ENCODE measurements at regions of chr7 and their contacts with region 1.

Region 1: GRCh38 chr7:73557108-73557396 is 438 bp downstream of the BCL7B start:
- DNase-seq: peak; percentile 89 to 92
- ATAC-seq: peak; percentile 76 to 80
- H3K4me3 ChIP-seq: peak overlapping the region; percentile 70 to 93 (median 75)
- H3K27ac ChIP-seq: peak overlapping the region; percentile 92 to 99 (median 98)
- H3K4me1 ChIP-seq: peaks cover 25 to 33% of the 10 kb centered on the region in 2 donors
- H3K27me3 ChIP-seq: no peaks in the 10 kb centered on the region
- CTCF ChIP-seq: no peak
- POLR2A ChIP-seq: no peak

Region 2: GRCh38 chr7:72087926-72088325 is 1469.1 kb before region 1 on chr7:
- in situ Hi-C with region 1: no loop called
- intact Hi-C with region 1: no loop called
- DNase-seq: no peak
- ATAC-seq: no peak
- H3K4me3 ChIP-seq: no peak overlapping the region
- H3K27ac ChIP-seq: no peak overlapping the region
- H3K4me1 ChIP-seq: no peaks in the 10 kb centered on the region
- H3K27me3 ChIP-seq: no peaks in the 10 kb centered on the region
- CTCF ChIP-seq: no peak
- POLR2A ChIP-seq: no peak

Region 3: DNA sequence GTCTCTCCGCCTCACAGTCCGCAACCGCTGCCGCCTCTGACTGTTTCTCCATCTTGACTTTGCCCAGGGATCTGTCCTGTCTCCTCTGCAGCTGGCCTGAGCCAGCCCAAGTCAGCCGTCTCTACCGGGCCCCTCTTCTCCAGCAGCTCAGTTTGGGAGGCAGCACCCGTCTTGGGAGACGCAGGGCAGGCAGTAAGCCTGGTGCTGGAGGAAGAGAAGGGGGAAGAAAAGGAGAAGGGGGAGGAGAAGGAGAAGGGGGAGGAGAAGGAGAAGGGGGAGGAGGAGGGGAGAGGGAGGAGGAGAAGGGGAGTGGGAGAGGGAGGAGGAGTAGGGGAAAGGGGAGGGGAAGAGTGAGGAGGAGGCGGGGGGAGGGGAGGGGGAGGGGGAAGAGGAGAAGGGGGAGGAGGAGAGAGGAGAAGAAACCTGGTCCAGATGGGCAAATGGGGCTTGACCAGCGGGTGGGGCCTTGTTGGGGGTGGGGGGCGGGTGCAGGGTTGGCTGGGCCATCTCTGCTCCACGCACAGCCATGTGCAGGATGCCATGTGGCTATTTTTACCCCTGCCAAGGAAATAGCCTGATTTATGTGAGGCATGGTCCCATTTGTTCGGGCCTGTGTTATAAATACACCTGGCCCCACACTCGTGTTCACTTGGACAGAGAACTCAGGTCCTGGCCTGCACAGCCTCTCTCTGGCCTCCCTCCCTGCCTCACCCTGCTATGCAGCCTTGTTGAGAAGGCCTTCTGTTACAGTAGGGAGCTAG is 159.4 kb before region 1 on chr7:
- in situ Hi-C with region 1: no loop called
- intact Hi-C with region 1: loop called (anchors 5 kb)
- DNase-seq: peak; percentile 90 to 91
- ATAC-seq: peak; percentile 89 to 91
- H3K4me3 ChIP-seq: peak overlapping the region; percentile 28 to 58 (median 50)
- H3K27ac ChIP-seq: peak overlapping the region; percentile 83 to 97 (median 90)
- H3K4me1 ChIP-seq: peaks cover 20 to 24% of the 10 kb centered on the region in 2 donors
- H3K27me3 ChIP-seq: no peaks in the 10 kb centered on the region
- CTCF ChIP-seq: no peak
- POLR2A ChIP-seq: peak; percentile 35 to 39

Region 4: DNA sequence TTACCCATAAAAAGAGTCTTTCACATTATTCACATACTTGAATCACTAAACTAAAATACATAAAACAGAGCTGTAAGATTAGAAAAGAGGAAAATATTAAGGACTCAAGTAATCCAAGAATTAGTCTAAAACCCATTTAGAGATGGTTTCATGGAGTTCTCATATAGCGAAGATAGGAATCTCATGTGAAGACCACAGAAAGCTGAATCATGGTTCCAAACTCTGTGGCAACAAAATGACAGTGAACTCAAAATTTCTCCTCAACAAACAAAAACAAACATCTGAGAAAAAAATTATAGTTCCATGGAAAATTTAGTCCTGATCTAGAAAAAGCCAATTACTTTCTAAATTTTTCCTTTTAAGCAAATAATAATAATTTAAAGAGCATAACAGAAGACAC is 69.6 kb before region 1 on chr7:
- in situ Hi-C with region 1: no loop called
- intact Hi-C with region 1: no loop called
- DNase-seq: no peak
- ATAC-seq: no peak
- H3K4me3 ChIP-seq: no peak overlapping the region
- H3K27ac ChIP-seq: peak overlapping the region in 1 of 4 donors; percentile 44
- H3K4me1 ChIP-seq: peaks cover 7 to 8% of the 10 kb centered on the region in 2 donors
- H3K27me3 ChIP-seq: no peaks in the 10 kb centered on the region
- CTCF ChIP-seq: no peak
- POLR2A ChIP-seq: no peak

Region 5: DNA sequence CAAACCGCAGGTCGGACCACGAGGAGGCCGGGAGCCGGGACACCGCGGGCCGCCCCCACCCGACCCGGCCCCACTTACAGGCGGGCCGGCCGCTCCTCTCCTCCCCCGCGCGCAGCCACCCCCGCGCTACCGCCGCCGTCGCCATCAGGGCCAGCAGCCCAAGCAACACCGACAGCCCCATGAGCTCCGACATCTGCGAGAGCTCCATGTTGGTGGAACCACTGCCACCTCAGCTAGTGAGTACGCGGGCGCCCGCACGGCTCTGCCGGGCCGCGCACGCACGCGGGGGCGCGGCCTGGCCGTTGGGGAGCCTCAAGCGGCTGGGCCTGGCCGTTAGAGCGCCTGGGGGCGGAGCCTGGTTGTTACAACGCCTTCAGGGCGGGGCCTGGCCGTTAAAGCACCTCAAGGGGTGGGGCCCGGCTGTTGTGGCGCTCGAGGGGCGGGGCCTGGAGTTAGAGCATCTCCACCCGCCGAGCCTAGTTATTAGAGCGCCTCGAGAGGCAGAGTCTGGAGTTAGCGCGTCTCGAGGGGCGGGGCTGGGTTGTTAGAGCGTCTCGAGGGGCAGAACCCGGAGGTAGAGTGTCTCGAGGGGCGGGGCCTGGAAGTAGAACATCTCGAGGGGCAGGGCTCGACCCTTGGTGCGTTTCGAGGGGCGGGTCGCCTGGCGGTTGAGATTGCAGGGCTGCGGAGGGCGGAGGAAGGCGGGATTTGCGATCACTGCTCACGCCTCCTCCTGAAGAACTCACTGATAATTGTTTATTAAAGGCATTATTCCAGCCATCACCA is 21.5 kb after region 1 on chr7 and contains the start of gene TBL2:
- in situ Hi-C with region 1: no loop called
- intact Hi-C with region 1: loop called (anchors 1 kb)
- DNase-seq: peak; percentile 97 to 99
- ATAC-seq: peak; percentile 90 to 91
- H3K4me3 ChIP-seq: peak within 1 kb of the TSS; percentile 68 to 97 (median 84)
- H3K27ac ChIP-seq: peak within 1 kb of the TSS; percentile 81 to 94 (median 88)
- H3K4me1 ChIP-seq: peaks cover 13 to 18% of the 10 kb centered on the region in 2 donors
- H3K27me3 ChIP-seq: no peaks in the 10 kb centered on the region
- CTCF ChIP-seq: peak in 2 of 5 experiments; percentile 23 to 31
- POLR2A ChIP-seq: peak; percentile 90 to 93
- total RNA-seq, gene TBL2: 14.4 to 32.9 (median 22.0) TPM

Region 6: GRCh38 chr7:73718905-73719805 is 162.1 kb after region 1 on chr7 and contains the start of gene STX1A:
- in situ Hi-C with region 1: no loop called
- intact Hi-C with region 1: loop called (anchors 1 kb)
- DNase-seq: peak; percentile 36 to 62
- ATAC-seq: peak; percentile 76 to 83
- H3K4me3 ChIP-seq: peak within 1 kb of the TSS; percentile 65 to 95 (median 81)
- H3K27ac ChIP-seq: peak within 1 kb of the TSS; percentile 43 to 78 (median 60)
- H3K4me1 ChIP-seq: peaks cover 10 to 28% of the 10 kb centered on the region in 2 donors
- H3K27me3 ChIP-seq: no peaks in the 10 kb centered on the region
- CTCF ChIP-seq: no peak
- POLR2A ChIP-seq: peak; percentile 51 to 72
- total RNA-seq, gene STX1A: 0.83 to 8.1 (median 3.2) TPM

Region 7: DNA sequence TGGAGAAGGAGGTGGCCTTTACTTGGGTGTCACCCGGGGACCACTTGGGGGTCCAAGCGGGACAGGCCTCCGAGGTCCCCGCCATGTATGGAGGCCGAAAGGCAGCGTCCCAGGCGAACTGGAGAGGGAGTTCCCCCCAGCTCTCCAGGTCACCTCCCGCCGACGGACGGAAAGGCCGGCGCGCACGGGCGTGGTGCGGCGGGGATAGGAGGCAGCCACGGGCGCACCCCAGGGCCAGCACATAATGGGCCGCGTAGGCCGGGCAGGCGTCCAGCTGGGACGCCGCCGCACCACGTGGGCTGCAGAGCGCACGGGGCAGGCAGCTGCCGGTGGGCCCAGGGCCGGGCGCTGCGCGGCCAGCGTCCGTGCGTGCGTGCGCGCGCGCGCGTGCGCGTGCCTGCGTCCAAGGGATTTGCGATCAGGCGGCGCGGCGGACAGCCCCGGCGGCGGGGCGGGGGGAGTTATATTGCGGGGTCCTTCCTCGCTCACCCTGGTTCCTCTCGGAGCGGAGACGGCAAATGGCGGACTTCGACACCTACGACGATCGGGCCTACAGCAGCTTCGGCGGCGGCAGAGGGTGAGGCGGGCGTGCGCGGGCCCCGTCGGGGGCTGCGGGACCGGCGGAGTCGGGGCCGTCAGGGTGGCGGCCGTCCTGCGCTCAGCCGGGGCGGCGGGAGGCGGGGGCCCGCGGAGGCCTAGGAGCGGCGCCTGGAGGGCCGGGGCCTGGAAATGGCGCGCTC is 617.0 kb after region 1 on chr7 and contains the start of gene EIF4H:
- in situ Hi-C with region 1: no loop called
- intact Hi-C with region 1: loop called (anchors 10 kb)
- DNase-seq: peak; percentile 95 to 96
- ATAC-seq: peak; percentile 87 to 90
- H3K4me3 ChIP-seq: peak within 1 kb of the TSS; percentile 91 to 93 (median 92)
- H3K27ac ChIP-seq: peak within 1 kb of the TSS; percentile 94 to 99 (median 95)
- H3K4me1 ChIP-seq: peaks cover 44 to 48% of the 10 kb centered on the region in 2 donors
- H3K27me3 ChIP-seq: no peaks in the 10 kb centered on the region
- CTCF ChIP-seq: peak in 1 of 5 experiments; percentile 42
- POLR2A ChIP-seq: peak; percentile 97
- total RNA-seq, gene EIF4H: 247 to 430 (median 309) TPM

Measured in gastrocnemius medialis (tissue), 4 donors.